ENCODE measurements at regions of chr15 and their contacts with region 1.

Region 1: DNA sequence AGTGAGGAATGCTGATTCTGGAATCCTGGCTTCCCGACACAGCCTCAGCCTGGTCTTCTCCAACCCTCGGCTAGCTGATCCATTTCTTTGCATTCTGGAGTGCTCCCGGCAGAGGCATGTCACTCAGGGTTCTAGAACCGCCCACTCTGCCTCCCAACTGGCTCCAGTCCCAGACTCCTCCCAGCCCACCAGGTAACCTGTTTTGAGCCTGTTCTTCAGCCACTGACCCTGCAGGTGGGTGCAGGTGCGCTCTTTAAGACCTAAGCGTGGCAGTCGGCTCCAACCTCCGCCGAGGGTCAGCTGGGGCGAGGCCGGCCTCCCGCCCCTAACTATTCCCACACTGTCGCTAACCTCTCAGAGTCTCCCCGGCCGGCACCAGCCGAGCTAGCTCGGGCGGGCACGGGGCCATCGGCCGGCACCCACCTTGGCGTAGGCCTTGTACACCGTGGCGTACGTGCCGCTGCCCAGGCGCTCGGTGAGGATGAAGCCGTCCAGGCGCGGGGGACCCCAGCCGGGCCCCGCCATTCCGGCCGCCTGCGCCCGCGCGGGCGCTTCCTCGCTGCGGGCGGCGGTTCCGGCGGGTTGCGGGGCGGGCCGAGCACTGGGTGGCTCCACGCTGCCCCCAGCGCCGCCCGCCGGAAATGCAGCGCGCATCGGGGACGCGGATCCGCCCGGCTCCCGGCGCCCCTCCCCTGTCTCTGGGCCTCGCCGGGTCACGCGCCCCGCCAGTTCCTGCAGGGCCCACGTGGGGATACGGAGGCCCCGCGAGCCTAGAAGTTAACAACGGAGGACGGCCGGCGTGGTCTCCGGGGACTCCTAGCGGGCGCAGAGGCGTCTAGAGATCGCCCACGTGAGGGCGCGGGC is at the start of gene ULK3:
- DNase-seq: peak; percentile 86
- H3K4me3 ChIP-seq: peak within 1 kb of the TSS; percentile 88 to 95
- H3K27ac ChIP-seq: peak within 1 kb of the TSS; percentile 89 to 94
- H3K4me1 ChIP-seq: peaks cover 10% of the 10 kb centered on the region
- H3K27me3 ChIP-seq: no peaks in the 10 kb centered on the region
- CTCF ChIP-seq: peak; percentile 65 to 94 (median 82)
- POLR2A ChIP-seq: peak; percentile 38
- total RNA-seq, gene ULK3: 44.6 to 98.5 TPM

Region 2: GRCh38 chr15:74781431-74782258 is 61.2 kb before region 1 on chr15 and contains the start of gene CSK:
- intact Hi-C with region 1: loop called (anchors 5 kb)
- DNase-seq: peak; percentile 55
- H3K4me3 ChIP-seq: peak within 1 kb of the TSS; percentile 80 to 82
- H3K27ac ChIP-seq: peak within 1 kb of the TSS; percentile 77 to 88
- H3K4me1 ChIP-seq: peaks cover 22% of the 10 kb centered on the region
- H3K27me3 ChIP-seq: no peaks in the 10 kb centered on the region
- CTCF ChIP-seq: peak; percentile 49 to 76 (median 66)
- POLR2A ChIP-seq: no peak
- total RNA-seq, gene CSK: 45.3 to 57.0 TPM

Region 3: GRCh38 chr15:74793135-74794028 is 49.4 kb before region 1 on chr15:
- intact Hi-C with region 1: no loop called
- DNase-seq: no peak
- H3K4me3 ChIP-seq: no peak overlapping the region
- H3K27ac ChIP-seq: no peak overlapping the region
- H3K4me1 ChIP-seq: peaks cover 19% of the 10 kb centered on the region
- H3K27me3 ChIP-seq: no peaks in the 10 kb centered on the region
- CTCF ChIP-seq: no peak
- POLR2A ChIP-seq: no peak

Region 4: DNA sequence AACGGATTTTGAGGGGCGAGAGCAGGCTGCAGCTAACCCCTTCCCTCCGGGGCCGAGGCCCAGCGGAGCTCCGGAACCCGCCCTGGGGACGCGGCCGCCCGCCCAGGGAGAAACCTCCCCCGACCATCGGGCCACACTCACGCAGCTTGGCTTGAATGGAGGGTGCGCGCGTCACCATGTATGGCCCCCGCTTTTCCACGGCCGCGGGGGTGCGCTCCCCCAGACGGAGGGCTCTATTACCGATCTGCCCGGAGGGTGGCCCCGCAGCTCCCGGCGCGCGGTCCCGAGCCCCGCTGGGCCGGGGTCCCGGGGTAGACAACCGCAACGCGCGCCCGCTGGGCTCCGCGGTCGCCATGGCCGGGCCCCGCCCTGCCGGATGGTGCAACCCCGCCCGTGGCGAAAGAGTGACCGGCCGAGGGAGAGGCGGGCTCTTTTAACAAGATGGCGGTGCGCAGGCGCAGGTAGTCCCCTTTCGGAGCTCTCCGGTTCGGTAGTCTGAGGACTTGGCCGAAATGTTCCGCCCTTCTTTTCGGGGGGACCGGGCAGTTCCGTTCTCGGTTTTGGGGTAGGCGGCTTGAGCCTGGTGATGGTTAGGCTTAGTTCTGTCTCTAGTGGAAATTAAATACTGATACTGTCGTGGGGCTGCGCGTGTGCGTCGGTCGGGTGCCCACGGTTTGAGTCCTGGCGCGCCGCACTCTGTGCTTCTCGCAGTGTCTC is 63.8 kb after region 1 on chr15 and contains the start of gene FAM219B:
- intact Hi-C with region 1: loop called (anchors 5 kb)
- DNase-seq: peak; percentile 92
- H3K4me3 ChIP-seq: peak within 1 kb of the TSS; percentile 76 to 97
- H3K27ac ChIP-seq: peak within 1 kb of the TSS; percentile 95 to 98
- H3K4me1 ChIP-seq: peaks cover 5% of the 10 kb centered on the region
- H3K27me3 ChIP-seq: no peaks in the 10 kb centered on the region
- CTCF ChIP-seq: no peak
- POLR2A ChIP-seq: peak; percentile 92
- total RNA-seq, gene FAM219B: 66.0 to 71.1 TPM

Region 5: DNA sequence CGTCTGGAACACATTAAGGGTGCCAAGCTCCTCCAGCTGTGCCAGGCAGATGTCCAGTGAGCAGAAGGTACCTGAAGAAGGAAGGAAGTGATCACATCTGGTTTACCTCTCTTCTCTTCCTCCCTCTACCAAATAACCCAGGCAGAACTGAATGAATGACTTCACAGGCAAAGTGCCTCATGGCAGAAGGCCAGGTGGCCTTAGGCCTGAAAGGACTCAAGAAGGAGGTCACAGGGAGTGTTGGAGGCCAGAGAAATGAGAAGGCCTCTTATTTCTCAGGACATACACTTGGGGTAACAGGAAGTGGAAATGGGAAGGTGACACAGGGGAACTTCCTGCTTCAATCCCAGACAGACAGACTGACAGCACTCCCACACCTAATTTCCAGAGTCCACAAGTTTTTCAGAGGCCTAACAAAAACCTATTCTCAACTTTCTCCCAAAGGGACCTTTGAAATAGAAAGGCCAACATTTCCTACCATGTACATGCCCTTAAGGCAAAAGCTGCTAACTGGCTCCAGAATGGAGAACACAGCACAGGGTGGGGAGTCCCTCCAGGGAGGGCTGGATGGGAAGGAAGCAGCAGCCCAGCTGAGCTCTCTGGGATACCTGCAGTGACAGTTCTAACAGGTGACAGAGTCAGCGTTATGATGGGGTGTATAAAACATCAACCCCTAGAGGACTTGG is 626.2 kb after region 1 on chr15:
- intact Hi-C with region 1: no loop called
- DNase-seq: no peak
- H3K4me3 ChIP-seq: no peak overlapping the region
- H3K27ac ChIP-seq: no peak overlapping the region
- H3K4me1 ChIP-seq: no peaks in the 10 kb centered on the region
- H3K27me3 ChIP-seq: no peaks in the 10 kb centered on the region
- CTCF ChIP-seq: no peak
- POLR2A ChIP-seq: no peak